Psoas muscle (tissue), 8 donors: ENCODE measurements at regions of chr12 and their contacts with region 1.

Region 1: DNA sequence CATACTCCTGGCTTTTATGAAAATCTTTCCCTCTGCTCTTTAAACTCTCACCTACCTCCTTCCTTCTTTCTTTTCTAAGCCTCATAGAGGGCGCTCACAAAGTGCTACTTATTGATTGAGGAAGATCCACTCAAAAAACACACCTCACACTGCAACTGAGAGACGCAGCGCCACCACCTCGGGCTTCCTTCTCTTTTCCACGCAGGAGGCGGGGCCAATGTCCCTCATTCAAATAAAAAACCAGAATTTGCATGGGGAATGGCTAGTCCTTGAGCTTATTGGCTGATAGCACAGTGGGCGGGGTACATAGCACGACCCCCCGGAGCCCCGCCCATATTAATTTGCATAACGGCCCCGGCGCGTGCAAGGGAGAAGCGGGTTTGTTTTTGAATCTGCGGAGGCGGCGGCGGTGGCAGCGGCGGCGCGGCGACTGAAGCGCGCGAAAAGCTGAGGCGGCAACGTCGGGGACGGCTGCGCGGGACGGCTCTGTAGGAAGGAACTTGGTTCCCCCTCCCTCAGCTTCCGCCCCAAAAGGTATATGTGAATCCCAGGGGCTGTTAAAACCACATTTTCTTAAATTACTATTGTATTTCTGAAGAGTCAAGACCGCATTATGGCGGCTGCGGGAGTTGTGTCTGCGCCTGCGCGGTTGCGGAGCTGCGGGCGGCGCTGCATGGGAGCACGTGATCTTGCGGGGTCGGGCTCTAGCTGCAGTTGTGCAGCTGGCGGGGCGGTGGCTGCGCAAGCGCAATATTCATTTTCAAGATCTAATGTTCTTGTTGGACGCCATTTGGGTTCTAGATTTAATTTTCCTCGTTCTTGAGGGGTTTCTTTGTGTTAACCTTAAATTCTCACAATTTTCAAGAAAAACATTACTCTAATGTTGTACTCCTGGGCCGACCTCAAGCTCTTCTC is at the start of gene ATF7IP:
- DNase-seq: peak; percentile 95 to 98
- ATAC-seq: peak; percentile 96 to 98 (median 97)
- H3K4me3 ChIP-seq: peak within 1 kb of the TSS; percentile 81
- H3K27ac ChIP-seq: peak within 1 kb of the TSS; percentile 97
- H3K4me1 ChIP-seq: peaks cover 5% of the 10 kb centered on the region
- H3K27me3 ChIP-seq: no peaks in the 10 kb centered on the region
- CTCF ChIP-seq: no peak
- total RNA-seq, gene ATF7IP: 28.5 to 56.3 (median 37.9) TPM

Region 2: GRCh38 chr12:14257734-14258574 is 107.6 kb before region 1 on chr12:
- intact Hi-C with region 1: loop called (anchors 2 to 5 kb)
- DNase-seq: peak; percentile 86 to 92
- ATAC-seq: peak; percentile 80 to 86 (median 83)
- H3K4me3 ChIP-seq: peak overlapping the region; percentile 25
- H3K27ac ChIP-seq: peak overlapping the region; percentile 75
- H3K4me1 ChIP-seq: peaks cover 35% of the 10 kb centered on the region
- H3K27me3 ChIP-seq: no peaks in the 10 kb centered on the region
- CTCF ChIP-seq: no peak

Region 3: GRCh38 chr12:14410841-14411569 is 45.5 kb after region 1 on chr12:
- intact Hi-C with region 1: loop called in 1 of 2 experiments (anchors 5 kb)
- DNase-seq: no peak
- ATAC-seq: no peak
- H3K4me3 ChIP-seq: no peak overlapping the region
- H3K27ac ChIP-seq: no peak overlapping the region
- H3K4me1 ChIP-seq: peaks cover 7% of the 10 kb centered on the region
- H3K27me3 ChIP-seq: no peaks in the 10 kb centered on the region
- CTCF ChIP-seq: no peak

Region 4: GRCh38 chr12:14521822-14522221 is 156.3 kb after region 1 on chr12:
- intact Hi-C with region 1: no loop called
- DNase-seq: no peak
- ATAC-seq: no peak
- H3K4me3 ChIP-seq: no peak overlapping the region
- H3K27ac ChIP-seq: no peak overlapping the region
- H3K4me1 ChIP-seq: no peaks in the 10 kb centered on the region
- H3K27me3 ChIP-seq: no peaks in the 10 kb centered on the region
- CTCF ChIP-seq: no peak

Region 5: DNA sequence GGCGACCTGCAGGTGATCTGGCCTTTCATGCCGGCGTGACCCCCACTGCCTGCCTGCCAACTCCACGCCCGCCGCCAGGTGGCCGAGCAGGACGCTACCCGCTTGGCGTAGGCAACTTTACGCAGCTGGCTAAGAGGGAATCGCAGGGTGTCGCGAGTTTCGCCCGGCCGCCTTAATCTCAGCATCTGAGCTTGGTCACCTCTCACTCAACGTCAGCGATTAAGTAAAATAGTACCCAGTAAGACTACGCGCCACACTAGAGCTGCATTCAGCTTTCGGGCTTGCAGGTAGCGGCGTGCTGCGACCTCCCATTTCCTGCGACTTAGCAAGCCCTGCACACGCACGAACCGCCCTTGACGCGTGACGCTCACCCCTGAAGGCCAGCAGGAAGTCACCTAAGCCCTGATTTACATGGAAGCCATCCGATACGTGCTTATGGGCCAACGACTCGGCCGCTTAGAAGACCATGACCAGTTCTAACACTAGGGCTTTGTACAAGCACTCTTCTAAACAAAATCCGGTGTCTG is 404.5 kb after region 1 on chr12:
- intact Hi-C with region 1: no loop called
- DNase-seq: peak; percentile 81 to 91
- ATAC-seq: peak; percentile 73 to 80 (median 76)
- H3K4me3 ChIP-seq: peak overlapping the region; percentile 91
- H3K27ac ChIP-seq: peak overlapping the region; percentile 97
- H3K4me1 ChIP-seq: peaks cover 16% of the 10 kb centered on the region
- H3K27me3 ChIP-seq: no peaks in the 10 kb centered on the region
- CTCF ChIP-seq: peak; percentile 80